ENCODE measurements at regions of chr6 and their contacts with region 1.

Region 1: DNA sequence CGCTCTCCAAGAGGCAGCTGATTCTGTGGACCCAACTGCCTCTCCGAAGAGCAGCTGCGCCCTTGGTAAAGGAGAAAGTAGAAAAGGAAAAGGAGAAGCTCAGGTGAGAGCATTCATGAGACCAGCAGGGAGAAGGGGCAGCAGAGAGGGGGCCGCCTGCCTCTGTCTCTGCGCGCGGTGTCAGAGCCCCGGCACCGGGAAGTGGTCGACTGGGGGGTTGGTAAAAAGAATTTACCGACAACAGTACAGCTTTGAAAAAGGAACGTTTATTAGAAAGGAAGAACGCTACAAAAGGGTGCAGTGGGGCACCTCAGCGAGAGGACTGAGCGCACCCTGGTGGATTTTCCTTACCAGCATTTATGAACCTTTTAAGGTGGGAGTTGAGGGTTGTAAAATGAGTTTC is 61.9 kb downstream of the GPR6 start:
- DNase-seq: no peak
- ATAC-seq: peak; percentile 67 to 73 (median 70)
- H3K4me3 ChIP-seq: peak overlapping the region; percentile 6 to 47 (median 39)
- H3K27ac ChIP-seq: peak overlapping the region in 2 of 3 donors; percentile 6 to 15
- H3K4me1 ChIP-seq: peaks cover 0 to 3% (median 0%) of the 10 kb centered on the region in 4 donors
- H3K27me3 ChIP-seq: no peaks in the 10 kb centered on the region
- CTCF ChIP-seq: peak; percentile 26 to 40 (median 34)
- POLR2A ChIP-seq: no peak

Region 2: GRCh38 chr6:109705258-109705657 is 334.7 kb before region 1 on chr6:
- intact Hi-C with region 1: loop called in 1 of 2 experiments (anchors 5 kb)
- DNase-seq: peak; percentile 76 to 83 (median 77)
- ATAC-seq: peak; percentile 99
- H3K4me3 ChIP-seq: no peak overlapping the region
- H3K27ac ChIP-seq: no peak overlapping the region
- H3K4me1 ChIP-seq: no peaks in the 10 kb centered on the region
- H3K27me3 ChIP-seq: no peaks in the 10 kb centered on the region
- CTCF ChIP-seq: peak; percentile 97 to 100 (median 98)
- POLR2A ChIP-seq: no peak

Region 3: DNA sequence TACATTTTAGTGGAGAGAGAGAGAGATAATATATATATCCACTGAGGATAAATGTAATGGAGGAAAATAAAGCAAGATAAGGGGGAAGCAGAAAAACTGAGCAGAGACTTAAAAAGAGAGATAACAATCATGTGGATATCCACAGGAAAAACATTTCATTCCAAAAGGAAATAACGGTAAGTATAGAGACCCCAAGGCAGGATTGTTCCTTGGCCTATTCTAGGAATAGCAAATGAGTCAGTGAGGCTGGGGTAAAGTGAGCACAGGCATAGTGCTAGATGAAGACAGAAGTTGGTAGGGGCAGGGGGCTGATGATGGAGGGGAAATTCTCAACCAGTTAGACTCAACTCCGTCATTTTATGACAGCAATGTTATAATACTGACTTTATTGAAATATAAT is 151.5 kb after region 1 on chr6:
- intact Hi-C with region 1: no loop called
- DNase-seq: no peak
- ATAC-seq: no peak
- H3K4me3 ChIP-seq: no peak overlapping the region
- H3K27ac ChIP-seq: no peak overlapping the region
- H3K4me1 ChIP-seq: peaks cover 0 to 17% (median 3%) of the 10 kb centered on the region in 4 donors
- H3K27me3 ChIP-seq: no peaks in the 10 kb centered on the region
- CTCF ChIP-seq: no peak
- POLR2A ChIP-seq: no peak

Measured in right lobe of liver (tissue), 6 donors.